ENCODE measurements at regions of chr6 and their contacts with region 1.

Region 1: DNA sequence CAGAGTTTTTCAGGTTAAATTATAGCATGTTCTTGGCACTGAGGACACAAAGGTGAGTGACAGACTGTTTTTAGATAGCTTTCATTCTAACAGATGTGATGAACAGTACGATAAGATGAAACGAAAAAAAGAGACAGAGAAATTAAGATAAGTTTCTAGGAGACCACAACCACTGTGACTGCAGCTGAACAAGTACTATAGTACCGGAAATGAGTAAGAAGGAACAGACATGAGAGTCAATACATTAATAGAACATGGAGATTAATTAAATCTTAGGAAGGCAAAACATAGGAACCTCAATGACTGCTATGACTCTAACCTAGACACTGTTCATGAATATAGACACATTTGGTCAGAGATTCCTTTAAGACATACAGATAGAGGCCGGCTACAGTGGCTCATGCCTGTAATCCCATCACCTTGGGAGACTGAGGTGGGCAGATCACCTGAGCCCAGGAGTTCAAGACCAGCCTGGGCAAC is 40.2 kb downstream of the HBS1L start:
- DNase-seq: no peak
- H3K4me3 Mint-ChIP-seq: peak overlapping the region; percentile 30
- H3K27ac Mint-ChIP-seq: peak overlapping the region; percentile 91
- H3K4me1 Mint-ChIP-seq: peaks cover 57% of the 10 kb centered on the region
- H3K27me3 Mint-ChIP-seq: no peaks in the 10 kb centered on the region

Region 2: DNA sequence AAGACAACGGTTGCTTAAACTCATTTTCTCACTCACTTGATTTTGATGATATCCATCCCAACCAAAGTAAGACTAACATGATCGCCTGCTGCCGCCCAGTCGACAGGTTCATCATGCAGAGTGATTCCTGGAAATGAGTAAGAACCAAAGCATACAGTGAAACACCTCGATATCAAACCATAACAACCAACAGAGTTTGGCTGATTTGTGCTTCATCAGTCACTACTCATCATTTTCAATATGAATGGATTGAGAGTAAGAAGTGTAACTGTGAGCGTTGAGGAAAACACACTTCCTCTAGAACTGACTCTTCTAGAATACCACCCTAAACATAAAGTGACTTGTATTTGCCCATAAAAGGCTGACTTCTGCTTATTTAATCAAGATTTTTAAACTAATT is 35.3 kb before region 1 on chr6:
- intact Hi-C with region 1: loop called (anchors 1 kb)
- DNase-seq: peak; percentile 55
- H3K4me3 Mint-ChIP-seq: peak overlapping the region; percentile 57
- H3K27ac Mint-ChIP-seq: peak overlapping the region; percentile 78
- H3K4me1 Mint-ChIP-seq: peaks cover 52% of the 10 kb centered on the region
- H3K27me3 Mint-ChIP-seq: no peaks in the 10 kb centered on the region

Region 3: DNA sequence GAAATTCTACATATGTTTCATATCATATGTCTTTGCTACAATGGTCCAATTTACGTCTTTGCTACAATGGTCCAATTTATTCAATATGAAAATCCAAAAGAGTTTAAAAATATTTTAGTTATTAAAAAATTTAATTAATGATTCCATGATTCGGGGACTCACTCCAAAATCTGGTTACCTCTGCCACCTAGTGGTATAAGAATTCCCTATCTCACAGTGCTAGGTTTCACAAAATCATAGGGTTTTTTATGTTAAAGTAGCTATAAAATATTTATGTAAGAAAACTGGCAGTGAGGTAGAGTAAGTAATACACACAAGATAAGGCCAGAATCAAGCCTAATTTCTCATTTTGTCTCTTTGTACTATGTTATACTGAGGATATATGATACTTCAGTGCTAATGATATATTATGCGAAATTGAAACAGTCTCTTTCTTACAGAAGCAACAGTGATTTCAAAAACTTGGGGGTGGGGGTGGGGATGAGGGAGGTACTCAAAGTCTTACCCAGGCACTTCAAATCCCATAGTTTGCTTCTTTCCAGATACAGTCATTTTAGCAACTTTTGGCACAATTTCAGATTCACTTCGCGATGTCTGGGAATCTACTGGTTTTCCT is 12.1 kb before region 1 on chr6:
- intact Hi-C with region 1: no loop called
- DNase-seq: no peak
- H3K4me3 Mint-ChIP-seq: no peak overlapping the region
- H3K27ac Mint-ChIP-seq: no peak overlapping the region
- H3K4me1 Mint-ChIP-seq: peaks cover 29% of the 10 kb centered on the region
- H3K27me3 Mint-ChIP-seq: no peaks in the 10 kb centered on the region

Region 4: DNA sequence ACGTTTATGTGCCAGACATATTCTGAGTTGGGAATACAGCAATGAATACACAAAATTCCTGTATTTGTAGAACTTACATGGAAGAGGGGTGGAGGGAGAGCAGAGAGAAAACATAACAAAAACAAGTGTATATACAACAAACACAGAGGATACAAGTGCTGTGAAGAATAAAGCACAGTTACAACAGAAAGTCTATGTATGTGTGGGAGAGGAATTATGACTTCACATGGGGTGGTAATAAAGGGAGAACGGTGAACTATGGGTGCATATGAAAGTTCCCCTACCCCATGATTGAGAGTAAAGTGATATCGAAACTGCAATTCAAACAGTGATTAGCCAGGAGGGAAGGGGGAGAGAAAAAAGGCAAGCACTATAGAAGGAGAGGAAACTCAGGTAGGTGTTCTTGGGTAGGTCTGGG is 15.7 kb after region 1 on chr6:
- intact Hi-C with region 1: loop called (anchors 1 kb)
- DNase-seq: no peak
- H3K4me3 Mint-ChIP-seq: peak overlapping the region; percentile 45
- H3K27ac Mint-ChIP-seq: peak overlapping the region; percentile 78
- H3K4me1 Mint-ChIP-seq: peaks cover 51% of the 10 kb centered on the region
- H3K27me3 Mint-ChIP-seq: no peaks in the 10 kb centered on the region

Region 5: DNA sequence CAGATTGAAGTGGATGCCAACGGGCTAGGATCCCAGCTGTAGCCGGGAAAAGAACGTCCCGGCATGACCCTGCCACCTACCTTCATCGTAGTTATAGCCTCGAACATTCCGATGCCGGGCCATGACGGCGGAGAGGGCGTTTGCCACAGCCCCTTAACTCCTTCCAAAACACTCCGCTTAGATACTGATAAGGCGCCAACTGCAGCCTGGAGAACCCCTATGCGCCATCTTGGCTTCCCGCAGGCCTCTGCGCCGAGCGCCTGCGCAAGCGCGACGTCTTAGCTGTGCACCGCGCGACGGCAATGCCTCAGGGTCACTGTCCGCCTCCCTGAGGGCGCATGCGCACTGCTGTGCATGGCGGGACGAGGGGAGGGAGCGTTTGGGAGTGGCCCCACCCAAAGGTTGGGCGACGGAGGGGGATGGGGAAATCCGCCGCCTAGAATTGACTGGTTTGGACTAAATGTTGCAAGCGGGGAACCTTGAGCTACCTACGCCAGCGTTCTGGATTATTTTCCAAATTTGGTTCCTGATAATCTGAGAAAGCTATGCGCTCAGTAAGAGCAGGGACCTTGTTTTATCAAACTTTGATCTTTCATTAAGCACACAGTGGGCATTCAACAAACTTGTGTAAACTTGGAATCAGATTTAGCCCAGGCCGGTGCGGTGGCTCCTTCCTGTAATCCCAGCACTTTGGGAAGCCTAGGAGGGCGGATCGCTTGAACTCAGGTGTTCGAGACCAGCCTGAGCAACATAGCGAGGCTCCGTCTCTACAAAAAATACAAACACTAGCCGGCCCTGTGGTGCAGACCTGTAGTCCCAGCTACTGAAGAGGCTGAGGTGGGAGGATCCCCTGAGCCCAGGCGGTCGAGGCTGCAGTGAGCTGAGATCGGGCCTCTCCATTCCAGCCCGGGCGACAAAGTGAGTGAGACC is 40.4 kb after region 1 on chr6 and contains the start of gene HBS1L:
- intact Hi-C with region 1: loop called (anchors 2 kb)
- DNase-seq: peak; percentile 98
- H3K4me3 Mint-ChIP-seq: peak within 1 kb of the TSS; percentile 97
- H3K27ac Mint-ChIP-seq: peak within 1 kb of the TSS; percentile 97
- H3K4me1 Mint-ChIP-seq: peaks cover 36% of the 10 kb centered on the region
- H3K27me3 Mint-ChIP-seq: no peaks in the 10 kb centered on the region
- total RNA-seq, gene HBS1L: 99.2 and 102 TPM in 2 replicates

Region 6: DNA sequence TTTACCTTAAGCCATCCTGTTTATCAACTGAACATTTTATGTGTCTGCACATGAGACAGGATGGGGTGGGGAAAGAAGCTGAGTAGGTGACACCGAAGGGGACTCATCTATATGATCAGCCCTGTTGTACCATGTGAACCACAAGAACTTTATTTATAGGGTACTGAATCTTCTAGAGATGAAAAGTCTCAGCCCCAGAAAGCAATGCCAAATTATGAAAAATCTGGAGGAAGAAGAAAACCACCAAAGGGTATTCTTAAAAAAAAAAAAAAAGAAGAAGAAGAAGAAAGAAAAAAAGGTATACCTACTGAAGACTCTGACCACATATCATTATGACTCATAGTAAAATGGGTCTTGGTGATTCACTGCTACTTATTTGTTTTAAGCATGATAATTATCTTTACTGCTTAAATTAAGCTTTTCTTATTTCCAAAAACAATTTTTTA is 80.0 kb after region 1 on chr6:
- intact Hi-C with region 1: loop called (anchors 1 kb)
- DNase-seq: no peak
- H3K4me3 Mint-ChIP-seq: peak overlapping the region; percentile 45
- H3K27ac Mint-ChIP-seq: peak overlapping the region; percentile 87
- H3K4me1 Mint-ChIP-seq: peaks cover 59% of the 10 kb centered on the region
- H3K27me3 Mint-ChIP-seq: no peaks in the 10 kb centered on the region

Region 7: DNA sequence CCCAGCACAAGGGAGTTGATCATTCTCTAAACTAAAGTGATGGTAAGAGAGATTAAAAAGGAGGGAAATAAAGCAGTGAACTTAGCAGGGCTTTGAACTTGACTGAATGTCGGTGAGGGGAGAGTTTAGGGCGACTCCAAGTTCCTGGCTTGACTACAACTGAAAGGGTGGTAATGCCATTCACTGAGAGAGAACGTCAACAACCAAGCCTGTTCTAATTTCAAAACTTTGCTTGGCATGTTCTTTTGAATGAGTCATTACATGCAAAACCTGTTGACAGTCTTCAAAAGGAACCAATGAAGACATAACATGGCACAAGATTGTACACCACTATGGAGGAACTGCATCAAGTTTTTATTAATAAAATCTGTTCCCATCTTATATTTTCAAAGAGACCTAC is 156.5 kb after region 1 on chr6:
- intact Hi-C with region 1: loop called (anchors 1 kb)
- DNase-seq: no peak
- H3K4me3 Mint-ChIP-seq: peak overlapping the region; percentile 35
- H3K27ac Mint-ChIP-seq: peak overlapping the region; percentile 86
- H3K4me1 Mint-ChIP-seq: peaks cover 43% of the 10 kb centered on the region
- H3K27me3 Mint-ChIP-seq: no peaks in the 10 kb centered on the region